Posterior cingulate gyrus (tissue), 11 donors: ENCODE measurements at regions of chr13 and their contacts with region 1.

Region 1: DNA sequence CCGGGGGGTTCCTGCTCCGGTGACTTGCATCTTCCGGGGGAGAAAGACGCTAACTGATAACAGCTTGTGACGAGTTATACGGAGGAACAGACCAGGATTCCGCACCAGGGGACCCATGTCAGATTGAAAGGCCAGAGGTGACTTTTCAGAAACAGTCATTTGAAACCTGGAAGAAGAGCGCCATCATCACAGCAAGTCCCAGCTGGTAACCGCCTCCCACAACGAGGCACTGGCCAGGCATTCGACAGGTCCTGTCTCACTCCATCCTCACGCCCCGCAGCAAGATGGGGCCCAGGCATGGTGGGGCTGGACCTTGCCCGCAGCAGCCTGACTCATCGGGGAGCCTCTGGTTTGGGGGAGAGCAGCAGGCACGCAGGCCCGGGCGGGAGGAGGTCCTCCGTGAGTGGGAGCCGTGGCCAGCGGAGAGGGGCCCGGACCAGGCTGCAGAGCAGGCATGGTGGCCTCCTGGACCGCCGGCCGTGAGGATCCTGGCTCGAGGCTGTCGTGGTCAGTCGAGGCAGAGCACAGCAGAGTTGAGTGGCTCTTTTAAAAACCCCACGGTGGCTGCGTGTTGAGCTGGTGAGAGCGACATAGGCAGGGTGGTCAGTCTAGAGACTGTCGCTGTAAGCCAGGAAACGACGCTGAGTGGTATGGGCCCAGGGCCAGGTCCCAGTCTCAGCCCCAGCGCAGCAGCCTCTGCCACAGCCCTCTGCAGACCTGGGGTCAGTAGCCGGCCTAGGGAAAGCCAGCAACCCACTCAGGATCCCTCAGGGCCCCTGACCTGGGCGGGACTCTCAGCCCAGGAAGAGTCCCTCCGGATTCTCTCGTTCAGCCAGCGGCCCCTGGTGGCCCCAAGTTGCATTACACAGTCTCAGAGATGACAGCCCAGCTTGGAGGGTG is 94.9 kb upstream of the MCF2L start:
- DNase-seq: peak; percentile 39 to 96 (median 83)

Region 2: GRCh38 chr13:112506056-112506455 is 368.0 kb before region 1 on chr13:
- intact Hi-C with region 1: loop called (anchors 5 kb)
- DNase-seq: no peak

Region 3: DNA sequence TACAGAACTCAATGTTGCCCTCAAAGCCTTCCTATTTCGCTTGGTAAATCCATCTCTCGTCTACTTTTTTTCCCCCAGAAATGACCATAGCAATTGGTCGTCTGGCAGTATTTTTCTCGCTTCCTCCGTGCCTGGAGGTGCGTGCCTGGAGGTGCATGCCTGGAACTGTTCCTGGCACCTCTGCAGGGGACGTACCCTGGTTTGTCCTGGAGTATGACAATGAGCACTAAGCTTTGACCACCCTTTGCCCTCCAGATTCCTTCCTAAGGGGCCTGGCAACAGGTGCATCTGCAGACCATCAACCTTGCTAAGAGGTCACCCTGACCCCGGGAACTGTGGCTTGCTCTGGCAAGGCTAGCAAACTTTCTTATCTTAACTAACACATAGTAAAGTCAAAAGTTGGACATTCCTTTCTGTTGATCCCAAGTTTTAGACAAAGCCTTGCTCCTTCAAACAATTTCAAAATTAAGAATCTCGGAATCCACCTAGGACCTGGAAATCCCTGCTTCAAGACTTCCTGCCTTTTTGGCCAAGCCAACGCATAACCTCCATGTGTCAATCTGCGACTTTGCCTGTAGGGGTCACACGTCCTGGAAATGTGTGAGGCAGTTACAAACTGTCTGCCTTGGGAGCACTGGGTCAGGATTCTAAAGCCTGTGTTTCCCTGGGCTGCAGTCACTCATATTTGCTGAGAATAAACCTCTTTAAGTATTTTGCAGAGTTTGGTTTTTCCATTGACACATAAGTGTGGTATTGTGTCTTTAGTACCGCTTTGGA is 257.3 kb before region 1 on chr13:
- intact Hi-C with region 1: loop called (anchors 1 kb)
- DNase-seq: no peak

Region 4: GRCh38 chr13:112638157-112638750 is 235.8 kb before region 1 on chr13:
- intact Hi-C with region 1: loop called (anchors 1 kb)
- DNase-seq: no peak

Region 5: GRCh38 chr13:112689303-112690165 is 184.6 kb before region 1 on chr13 and contains the start of gene ATP11A:
- intact Hi-C with region 1: loop called (anchors 1 kb)
- DNase-seq: peak; percentile 83 to 99 (median 90)